H1 (cell line): ENCODE measurements at regions of chr22 and their contacts with region 1.

Region 1: GRCh38 chr22:20456064-20456721 is 18.6 kb upstream of the SCARF2 start:
- DNase-seq: peak; percentile 71 to 86
- H3K4me3 ChIP-seq: no peak overlapping the region
- H3K27ac ChIP-seq: no peak overlapping the region; the same call in 1 of the 2 replicates
- H3K4me1 ChIP-seq: peaks cover 0 to 2% (median under 1%) of the 10 kb centered on the region in 4 experiments; a peak in 2 of 7 replicates
- H3K27me3 ChIP-seq: no peaks in the 10 kb centered on the region
- CTCF ChIP-seq: peak; percentile 91 to 98 (median 93)
- EP300 ChIP-seq: no peak
- POLR2A ChIP-seq: no peak
- RAD21 ChIP-seq: peak; percentile 96 to 98

Region 2: DNA sequence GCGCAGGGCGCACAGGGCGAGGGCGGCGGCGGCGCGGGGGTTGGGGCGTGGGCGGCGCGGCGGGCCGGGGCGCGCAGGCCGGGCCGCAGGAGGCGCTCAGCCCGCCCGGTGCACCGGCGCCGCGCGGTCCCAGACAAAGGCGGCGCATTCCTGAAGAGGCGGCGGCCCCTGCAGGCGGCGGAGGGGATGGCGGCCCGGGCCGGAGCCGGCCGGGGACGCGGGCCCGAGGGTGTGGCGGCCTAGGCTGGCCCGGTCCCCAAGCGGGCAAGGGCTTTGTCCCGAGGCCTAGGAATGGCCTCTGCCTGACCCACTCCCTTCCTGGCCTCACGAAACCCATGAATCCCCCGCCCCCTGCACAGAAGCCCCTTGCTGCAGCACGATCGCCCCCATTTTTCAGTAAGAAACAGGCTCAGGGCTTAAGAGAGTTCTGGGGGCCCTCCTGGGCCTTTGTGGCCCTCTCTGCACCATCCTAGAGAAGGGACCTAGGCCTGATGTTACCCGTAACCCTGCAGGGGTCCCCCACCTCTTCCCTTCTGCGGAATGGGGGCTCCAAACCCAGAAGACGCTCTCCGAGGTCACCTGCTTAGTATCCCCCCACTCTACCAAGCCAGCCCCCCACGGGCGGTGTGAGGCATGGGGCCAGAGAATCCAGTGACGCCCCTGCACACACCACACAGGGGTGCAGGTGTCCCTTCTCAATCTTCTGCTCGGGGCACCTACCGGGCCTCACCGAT is 187.7 kb before region 1 on chr22 and contains the start of gene RTN4R:
- CTCF ChIA-PET with region 1: no interaction called
- POLR2A ChIA-PET with region 1: no interaction called
- DNase-seq: peak in 1 of 2 experiments; percentile 86
- H3K4me3 ChIP-seq: peak within 1 kb of the TSS; percentile 30 to 64 (median 51)
- H3K27ac ChIP-seq: peak within 1 kb of the TSS; percentile 63; the same call in 1 of the 2 replicates
- H3K4me1 ChIP-seq: peaks cover 0 to 10% (median 7%) of the 10 kb centered on the region in 4 experiments; a peak in 5 of 7 replicates
- H3K27me3 ChIP-seq: no peaks in the 10 kb centered on the region; a peak in 2 of 7 replicates
- CTCF ChIP-seq: peak; percentile 62 to 91 (median 78)
- EP300 ChIP-seq: no peak
- POLR2A ChIP-seq: no peak; a peak in 1 of 3 replicates
- RAD21 ChIP-seq: peak; percentile 65 to 80
- total RNA-seq, gene RTN4R: 21.8 and 22.5 TPM in 2 replicates

Region 3: DNA sequence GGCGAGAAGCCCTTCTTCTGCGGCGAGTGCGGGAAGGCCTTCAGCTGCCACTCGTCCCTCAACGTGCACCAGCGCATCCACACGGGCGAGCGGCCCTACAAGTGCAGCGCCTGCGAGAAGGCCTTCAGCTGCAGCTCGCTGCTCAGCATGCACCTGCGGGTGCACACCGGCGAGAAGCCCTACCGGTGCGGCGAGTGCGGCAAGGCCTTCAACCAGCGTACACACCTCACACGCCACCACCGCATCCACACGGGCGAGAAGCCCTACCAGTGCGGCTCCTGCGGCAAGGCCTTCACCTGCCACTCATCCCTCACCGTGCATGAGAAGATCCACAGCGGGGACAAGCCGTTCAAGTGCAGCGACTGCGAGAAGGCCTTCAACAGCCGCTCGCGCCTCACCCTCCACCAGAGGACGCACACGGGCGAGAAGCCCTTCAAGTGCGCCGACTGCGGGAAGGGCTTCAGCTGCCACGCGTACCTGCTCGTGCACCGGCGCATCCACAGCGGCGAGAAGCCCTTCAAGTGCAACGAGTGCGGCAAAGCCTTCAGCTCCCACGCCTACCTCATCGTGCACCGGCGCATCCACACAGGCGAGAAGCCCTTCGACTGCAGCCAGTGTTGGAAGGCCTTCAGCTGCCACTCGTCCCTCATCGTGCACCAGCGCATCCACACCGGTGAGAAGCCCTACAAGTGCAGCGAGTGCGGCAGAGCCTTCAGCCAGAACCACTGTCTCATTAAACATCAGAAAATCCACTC is 50.1 kb before region 1 on chr22:
- CTCF ChIA-PET with region 1: interaction called, 19 read pairs
- POLR2A ChIA-PET with region 1: no interaction called
- DNase-seq: no peak
- H3K4me3 ChIP-seq: no peak overlapping the region
- H3K27ac ChIP-seq: no peak overlapping the region
- H3K4me1 ChIP-seq: no peaks in the 10 kb centered on the region
- H3K27me3 ChIP-seq: no peaks in the 10 kb centered on the region
- CTCF ChIP-seq: no peak
- EP300 ChIP-seq: no peak
- POLR2A ChIP-seq: no peak
- RAD21 ChIP-seq: no peak

Region 4: GRCh38 chr22:20437613-20438426 is 18.4 kb before region 1 on chr22 and contains the start of gene SCARF2:
- CTCF ChIA-PET with region 1: interaction called, 47 read pairs
- POLR2A ChIA-PET with region 1: interaction called, 3 read pairs
- DNase-seq: peak in 1 of 2 experiments; percentile 80
- H3K4me3 ChIP-seq: peak within 1 kb of the TSS; percentile 50 to 78 (median 56)
- H3K27ac ChIP-seq: no peak within 1 kb of the TSS
- H3K4me1 ChIP-seq: peaks cover 0 to 15% (median 6%) of the 10 kb centered on the region in 4 experiments; a peak in 5 of 7 replicates
- H3K27me3 ChIP-seq: peaks cover 18 to 62% (median 51%) of the 10 kb centered on the region in 4 experiments
- CTCF ChIP-seq: no peak
- EP300 ChIP-seq: no peak; a peak in 1 of 3 replicates
- POLR2A ChIP-seq: no peak
- RAD21 ChIP-seq: no peak
- total RNA-seq, gene SCARF2: 9.8 and 10.0 TPM in 2 replicates

Region 5: GRCh38 chr22:20469110-20469868 is 13.1 kb after region 1 on chr22:
- CTCF ChIA-PET with region 1: interaction called, 12 read pairs
- POLR2A ChIA-PET with region 1: interaction called, 3 read pairs
- DNase-seq: no peak
- H3K4me3 ChIP-seq: no peak overlapping the region
- H3K27ac ChIP-seq: no peak overlapping the region
- H3K4me1 ChIP-seq: no peaks in the 10 kb centered on the region
- H3K27me3 ChIP-seq: no peaks in the 10 kb centered on the region
- CTCF ChIP-seq: no peak
- EP300 ChIP-seq: no peak
- POLR2A ChIP-seq: no peak
- RAD21 ChIP-seq: no peak